ENCODE measurements at regions of chr4 and their contacts with region 1.

Region 1: DNA sequence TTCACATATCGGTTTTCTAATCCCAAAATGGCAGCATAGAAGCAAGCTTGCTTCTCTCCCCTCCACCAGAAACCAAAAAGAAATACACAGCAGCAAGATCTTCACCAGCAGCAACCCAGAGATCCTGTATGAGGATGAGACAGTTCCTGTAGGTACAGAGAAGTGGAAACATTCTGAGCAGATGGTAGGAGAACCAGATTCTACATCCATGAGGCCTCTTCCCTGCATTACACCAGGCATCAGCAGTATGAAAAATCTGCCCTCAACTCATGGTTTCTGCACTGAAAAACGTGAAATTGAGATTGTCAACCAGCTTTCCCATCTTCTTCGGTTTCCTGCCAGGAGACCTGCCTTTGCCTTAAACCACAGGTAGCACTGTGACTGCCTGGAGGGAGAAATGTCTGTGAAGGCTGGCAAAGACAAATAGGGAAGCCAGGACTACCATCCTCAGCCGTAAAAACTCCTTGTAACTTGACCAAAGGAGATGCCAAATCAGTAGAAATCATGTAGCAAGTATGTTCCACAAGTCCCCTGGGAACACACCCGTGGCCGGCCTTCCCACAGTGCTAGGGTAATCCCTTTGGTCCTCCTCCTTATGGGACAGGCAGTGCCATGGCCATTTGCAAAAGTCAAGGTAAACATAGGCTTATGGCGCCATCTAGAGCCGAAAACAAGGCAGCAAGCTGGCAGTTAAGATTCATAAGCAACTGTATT is 24.0 kb upstream of the MTHFD2L start:
- DNase-seq: peak; percentile 90
- H3K4me3 ChIP-seq: no peak overlapping the region
- H3K27ac ChIP-seq: no peak overlapping the region
- H3K4me1 ChIP-seq: no peaks in the 10 kb centered on the region
- H3K27me3 ChIP-seq: no peaks in the 10 kb centered on the region
- CTCF ChIP-seq: peak; percentile 64 to 81
- POLR2A ChIP-seq: no peak

Region 2: GRCh38 chr4:73446336-73446938 is 687.5 kb before region 1 on chr4:
- CTCF ChIA-PET with region 1: interaction called, 18 read pairs
- POLR2A ChIA-PET with region 1: no interaction called
- dilution Hi-C with region 1: no loop called
- intact Hi-C with region 1: no loop called
- DNase-seq: peak; percentile 40
- H3K4me3 ChIP-seq: no peak overlapping the region
- H3K27ac ChIP-seq: no peak overlapping the region
- H3K4me1 ChIP-seq: no peaks in the 10 kb centered on the region
- H3K27me3 ChIP-seq: peaks cover 12 to 42% of the 10 kb centered on the region in 2 experiments
- CTCF ChIP-seq: peak; percentile 53 to 59
- POLR2A ChIP-seq: no peak

Region 3: DNA sequence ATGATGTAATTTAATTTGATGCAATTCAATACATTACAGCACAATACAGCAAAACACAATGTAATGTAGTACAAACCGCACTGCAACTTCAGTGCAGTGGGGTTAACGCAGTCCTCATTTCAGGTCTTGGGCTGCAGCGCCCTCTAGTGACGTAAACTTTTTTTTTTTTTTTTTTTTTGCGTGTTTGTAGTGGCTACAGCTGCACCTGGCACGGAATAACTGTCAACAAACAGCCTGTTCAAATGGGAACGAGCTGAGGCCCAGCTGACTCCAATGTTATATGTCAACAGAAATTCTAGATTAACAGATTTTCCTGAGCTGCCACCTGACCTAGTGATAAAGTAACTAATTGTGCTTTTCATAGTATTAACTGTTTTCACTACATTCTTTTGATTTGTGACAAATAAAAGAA is 480.2 kb before region 1 on chr4:
- CTCF ChIA-PET with region 1: interaction called, 44 read pairs
- POLR2A ChIA-PET with region 1: no interaction called
- dilution Hi-C with region 1: no loop called
- intact Hi-C with region 1: loop called (anchors 2 kb)
- DNase-seq: peak; percentile 91
- H3K4me3 ChIP-seq: no peak overlapping the region
- H3K27ac ChIP-seq: no peak overlapping the region
- H3K4me1 ChIP-seq: no peaks in the 10 kb centered on the region
- H3K27me3 ChIP-seq: no peaks in the 10 kb centered on the region
- CTCF ChIP-seq: peak; percentile 33 to 41
- POLR2A ChIP-seq: no peak

Region 4: DNA sequence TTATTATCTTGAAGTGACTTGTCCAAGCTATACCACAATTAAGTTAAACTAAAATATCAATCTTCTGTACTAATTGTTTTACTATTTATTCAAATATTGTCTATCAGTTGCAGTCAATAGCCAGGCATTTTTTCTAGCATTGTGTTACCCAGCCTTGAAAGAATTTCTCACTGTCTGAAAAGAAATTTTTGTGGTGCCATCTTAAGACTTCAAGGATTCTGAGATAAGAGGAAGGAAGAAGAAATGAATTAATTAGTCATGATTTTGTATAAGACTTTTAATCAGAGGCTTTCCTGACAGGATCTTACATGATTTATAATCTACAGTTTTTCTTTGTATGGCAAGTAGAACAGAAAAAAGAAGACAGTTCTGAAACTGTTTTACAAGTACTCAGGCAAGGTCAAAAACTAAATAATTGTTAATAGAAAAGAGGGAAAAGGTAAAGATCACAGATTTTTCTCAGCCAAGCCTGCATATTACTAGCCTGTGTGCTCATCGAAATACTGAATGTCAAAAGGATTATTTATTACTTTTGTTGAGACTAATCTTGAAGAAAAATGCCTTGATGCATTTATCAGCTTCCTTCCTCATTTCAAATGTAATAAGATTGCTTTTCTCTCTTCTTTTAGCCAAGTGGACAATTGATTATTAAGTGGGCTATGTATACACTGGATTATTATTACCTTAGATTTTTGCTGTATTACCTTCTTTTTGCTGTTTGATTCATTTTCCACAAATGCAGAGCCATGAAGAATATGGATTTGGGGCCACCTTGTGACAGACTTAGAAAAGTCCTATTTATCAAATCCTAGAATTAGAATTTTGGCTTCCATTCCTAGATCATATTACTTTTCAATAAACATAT is 210.9 kb before region 1 on chr4:
- CTCF ChIA-PET with region 1: interaction called, 27 read pairs
- POLR2A ChIA-PET with region 1: no interaction called
- dilution Hi-C with region 1: no loop called
- intact Hi-C with region 1: loop called (anchors 1 kb)
- DNase-seq: peak; percentile 76
- H3K4me3 ChIP-seq: no peak overlapping the region
- H3K27ac ChIP-seq: no peak overlapping the region
- H3K4me1 ChIP-seq: peaks cover 10% of the 10 kb centered on the region
- H3K27me3 ChIP-seq: no peaks in the 10 kb centered on the region
- CTCF ChIP-seq: peak; percentile 9 to 14
- POLR2A ChIP-seq: no peak

Region 5: GRCh38 chr4:74038161-74039064 is 95.5 kb before region 1 on chr4 and contains the start of gene CXCL3:
- CTCF ChIA-PET with region 1: interaction called, 49 read pairs
- POLR2A ChIA-PET with region 1: no interaction called
- dilution Hi-C with region 1: no loop called
- intact Hi-C with region 1: loop called (anchors 1 kb)
- DNase-seq: peak; percentile 67
- H3K4me3 ChIP-seq: peak within 1 kb of the TSS; percentile 75 to 86 (median 82)
- H3K27ac ChIP-seq: peak within 1 kb of the TSS; percentile 88
- H3K4me1 ChIP-seq: peaks cover 11% of the 10 kb centered on the region
- H3K27me3 ChIP-seq: no peaks in the 10 kb centered on the region
- CTCF ChIP-seq: peak; percentile 23 to 44
- POLR2A ChIP-seq: peak; percentile 22
- total RNA-seq, gene CXCL3: 1.3 and 1.4 TPM in 2 replicates

Region 6: DNA sequence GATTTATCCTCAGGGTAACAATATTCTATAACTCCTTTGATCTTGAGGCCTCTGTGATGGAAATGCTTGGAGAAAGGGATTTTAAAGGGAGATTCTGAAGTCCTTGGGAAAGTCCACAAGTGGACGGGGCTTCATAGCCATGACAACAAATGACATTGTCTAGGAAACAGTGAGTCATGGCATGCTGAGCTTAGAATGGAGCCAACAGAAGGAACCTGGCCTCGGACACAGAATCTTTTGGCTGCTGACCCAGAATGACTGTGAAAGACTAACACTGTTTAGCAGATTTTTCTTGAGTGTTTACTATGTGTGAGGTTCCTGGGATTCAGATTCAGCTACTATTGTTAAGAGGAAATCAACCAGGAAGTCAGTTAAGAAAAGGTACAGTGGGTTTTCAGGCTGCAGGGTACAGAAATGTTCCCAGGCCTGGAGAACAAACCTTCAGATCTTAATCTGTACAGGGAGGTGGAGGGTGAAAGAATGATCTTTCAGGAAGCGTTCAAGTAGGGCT is 16.9 kb before region 1 on chr4:
- CTCF ChIA-PET with region 1: interaction called, 40 read pairs
- POLR2A ChIA-PET with region 1: no interaction called
- dilution Hi-C with region 1: no loop called
- intact Hi-C with region 1: no loop called
- DNase-seq: peak; percentile 99
- H3K4me3 ChIP-seq: no peak overlapping the region
- H3K27ac ChIP-seq: peak overlapping the region; percentile 91
- H3K4me1 ChIP-seq: peaks cover 18% of the 10 kb centered on the region
- H3K27me3 ChIP-seq: no peaks in the 10 kb centered on the region
- CTCF ChIP-seq: no peak
- POLR2A ChIP-seq: no peak

Region 7: DNA sequence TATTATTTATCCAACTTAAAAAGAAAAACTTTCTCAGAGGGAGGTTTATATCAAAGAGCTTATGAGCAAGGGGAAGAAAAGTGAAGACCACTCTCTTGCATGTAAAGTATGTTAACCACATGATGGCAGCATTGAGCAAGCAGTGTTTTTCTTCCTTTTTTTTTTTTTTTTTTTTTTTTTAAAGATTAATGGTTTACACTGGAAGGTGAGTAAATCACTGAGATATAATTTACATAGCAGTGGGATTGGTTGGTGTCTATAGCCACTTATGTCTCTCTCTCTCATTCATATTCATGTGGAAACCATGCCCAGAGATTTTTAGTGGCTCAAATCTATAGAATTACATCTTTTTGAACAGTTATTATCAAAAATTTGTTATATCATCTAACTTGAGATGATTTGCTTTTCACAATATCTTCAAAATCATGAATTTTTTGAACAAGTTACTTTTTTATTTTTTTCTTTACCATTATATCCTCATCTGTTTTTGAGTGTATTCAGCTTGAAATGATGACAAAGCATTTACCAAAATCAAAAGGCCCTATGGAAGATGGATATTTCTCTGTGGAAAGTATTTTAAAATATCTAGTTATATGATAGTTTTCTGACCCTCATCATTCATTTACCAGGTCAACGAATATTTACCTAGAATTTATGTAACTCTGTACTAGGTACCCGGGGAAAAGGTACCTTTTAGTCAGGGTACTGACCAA is 55.5 kb after region 1 on chr4:
- CTCF ChIA-PET with region 1: no interaction called
- POLR2A ChIA-PET with region 1: no interaction called
- dilution Hi-C with region 1: no loop called
- intact Hi-C with region 1: no loop called
- DNase-seq: peak; percentile 66
- H3K4me3 ChIP-seq: no peak overlapping the region
- H3K27ac ChIP-seq: no peak overlapping the region
- H3K4me1 ChIP-seq: no peaks in the 10 kb centered on the region
- H3K27me3 ChIP-seq: no peaks in the 10 kb centered on the region
- CTCF ChIP-seq: peak; percentile 37 to 63
- POLR2A ChIP-seq: no peak

Region 8: DNA sequence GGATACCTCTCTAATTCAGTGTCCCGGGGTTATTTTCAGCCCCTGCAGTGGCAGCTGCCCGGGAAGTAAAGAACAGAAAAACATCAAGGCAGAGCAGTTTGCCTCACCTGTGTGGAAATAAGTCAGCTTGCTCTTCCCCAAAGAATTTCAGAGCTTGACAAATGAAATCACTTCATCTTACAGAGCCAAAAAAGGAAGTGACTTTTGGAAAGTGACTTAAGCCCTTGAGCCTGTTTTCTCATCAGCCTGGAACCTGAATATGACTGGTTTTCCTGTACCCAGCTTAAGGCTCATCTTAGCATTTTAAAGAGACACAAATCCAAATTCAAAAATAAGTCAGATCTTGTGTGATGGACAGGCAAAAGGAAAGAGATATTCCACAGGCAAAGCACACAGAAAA is 1168.7 kb after region 1 on chr4:
- CTCF ChIA-PET with region 1: no interaction called
- POLR2A ChIA-PET with region 1: no interaction called
- dilution Hi-C with region 1: no loop called
- intact Hi-C with region 1: no loop called
- DNase-seq: no peak
- H3K4me3 ChIP-seq: no peak overlapping the region
- H3K27ac ChIP-seq: no peak overlapping the region
- H3K4me1 ChIP-seq: no peaks in the 10 kb centered on the region
- H3K27me3 ChIP-seq: peaks cover 0 to 2% of the 10 kb centered on the region in 2 experiments
- CTCF ChIP-seq: no peak
- POLR2A ChIP-seq: no peak